Motor neuron (in vitro differentiated cells): ENCODE measurements at regions of chr20 and their contacts with region 1.

Region 1: GRCh38 chr20:41339507-41340326 is 904 bp upstream of the LPIN3 start:
- ATAC-seq: peak; percentile 67 to 85 (median 75)
- H3K4me3 ChIP-seq: peak overlapping the region in 4 of 5 donors; percentile 11 to 27 (median 20)
- H3K27ac ChIP-seq: no peak overlapping the region
- H3K4me1 ChIP-seq: peaks cover 0 to 7% of the 10 kb centered on the region in 2 donors

Region 2: GRCh38 chr20:40962730-40963504 is 376.8 kb before region 1 on chr20:
- in situ Hi-C with region 1: loop called in 3 of 9 experiments (anchors 25 kb)
- ATAC-seq: peak; percentile 74 to 96 (median 92)
- H3K4me3 ChIP-seq: no peak overlapping the region
- H3K27ac ChIP-seq: no peak overlapping the region
- H3K4me1 ChIP-seq: peaks cover 3 to 5% of the 10 kb centered on the region in 2 donors

Region 3: GRCh38 chr20:40970201-40970600 is 369.5 kb before region 1 on chr20:
- in situ Hi-C with region 1: loop called in 8 of 9 experiments (anchors 10 to 25 kb)
- ATAC-seq: no peak
- H3K4me3 ChIP-seq: no peak overlapping the region
- H3K27ac ChIP-seq: no peak overlapping the region
- H3K4me1 ChIP-seq: no peaks in the 10 kb centered on the region

Region 4: GRCh38 chr20:40990542-40991120 is 349.1 kb before region 1 on chr20:
- in situ Hi-C with region 1: loop called in 4 of 9 experiments (anchors 25 kb)
- ATAC-seq: peak; percentile 97 to 100 (median 100)
- H3K4me3 ChIP-seq: no peak overlapping the region
- H3K27ac ChIP-seq: no peak overlapping the region
- H3K4me1 ChIP-seq: peaks cover 0 to 2% of the 10 kb centered on the region in 2 donors

Region 5: GRCh38 chr20:41173161-41173721 is 166.5 kb before region 1 on chr20:
- in situ Hi-C with region 1: loop called in 8 of 9 experiments (anchors 5 to 25 kb)
- ATAC-seq: peak; percentile 81 to 97 (median 96)
- H3K4me3 ChIP-seq: no peak overlapping the region
- H3K27ac ChIP-seq: no peak overlapping the region
- H3K4me1 ChIP-seq: no peaks in the 10 kb centered on the region

Region 6: DNA sequence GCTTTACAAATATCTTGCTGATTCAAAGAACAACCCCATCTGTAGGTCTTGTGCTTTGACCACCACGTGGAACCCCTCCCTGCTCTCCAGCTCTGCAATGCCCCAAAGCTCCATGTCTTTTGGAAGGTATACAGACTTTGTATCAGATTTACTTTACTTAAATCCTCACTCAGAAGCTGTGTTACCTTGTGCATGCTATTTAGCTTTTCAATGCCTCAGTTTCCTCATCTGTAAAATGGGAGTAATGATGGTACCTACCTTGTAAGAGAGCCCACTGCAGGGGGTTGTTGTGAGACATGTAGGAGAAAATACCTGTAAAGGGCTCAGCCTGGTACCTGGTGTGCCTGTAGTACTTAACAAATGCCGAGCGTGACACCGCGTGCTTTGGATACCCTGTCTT is 478.7 kb after region 1 on chr20:
- in situ Hi-C with region 1: no loop called
- ATAC-seq: no peak
- H3K4me3 ChIP-seq: no peak overlapping the region
- H3K27ac ChIP-seq: no peak overlapping the region
- H3K4me1 ChIP-seq: no peaks in the 10 kb centered on the region